Adrenal gland (tissue), 19 donors: ENCODE measurements at regions of chr17 and their contacts with region 1.

Region 1: GRCh38 chr17:8253800-8254199 is 4.7 kb downstream of the PFAS start:
- DNase-seq: peak in 2 of 7 donors; percentile 28 to 34
- H3K4me3 ChIP-seq: no peak overlapping the region
- H3K27ac ChIP-seq: no peak overlapping the region
- H3K4me1 ChIP-seq: peaks cover 0 to 8% of the 10 kb centered on the region in 2 donors
- H3K27me3 ChIP-seq: no peaks in the 10 kb centered on the region
- CTCF ChIP-seq: peak in 2 of 6 experiments; percentile 18 to 28
- POLR2A ChIP-seq: no peak

Region 2: GRCh38 chr17:7687908-7688807 is 565.6 kb before region 1 on chr17 and contains the start of gene WRAP53:
- intact Hi-C with region 1: no loop called
- DNase-seq: peak; percentile 97 to 100 (median 99)
- H3K4me3 ChIP-seq: peak within 1 kb of the TSS; percentile 6 to 99 (median 88)
- H3K27ac ChIP-seq: peak within 1 kb of the TSS; percentile 86 to 98 (median 97)
- H3K4me1 ChIP-seq: peaks cover 5 to 26% of the 10 kb centered on the region in 2 donors
- H3K27me3 ChIP-seq: no peaks in the 10 kb centered on the region
- CTCF ChIP-seq: peak; percentile 98 to 100 (median 99)
- POLR2A ChIP-seq: peak in 1 of 2 donors; percentile 58
- total RNA-seq, gene WRAP53: 3.4 to 15.3 (median 6.7) TPM

Region 3: GRCh38 chr17:8288336-8289102 is 34.7 kb after region 1 on chr17 and contains the start of gene RANGRF:
- intact Hi-C with region 1: loop called (anchors 5 kb)
- DNase-seq: peak; percentile 89 to 95 (median 92)
- H3K4me3 ChIP-seq: peak within 1 kb of the TSS; percentile 59 to 88 (median 70)
- H3K27ac ChIP-seq: peak within 1 kb of the TSS; percentile 75 to 98 (median 94)
- H3K4me1 ChIP-seq: peaks cover 9 to 11% of the 10 kb centered on the region in 2 donors
- H3K27me3 ChIP-seq: no peaks in the 10 kb centered on the region
- CTCF ChIP-seq: peak in 1 of 6 experiments; percentile 8
- POLR2A ChIP-seq: peak; percentile 54
- total RNA-seq, gene RANGRF: 18.8 to 30.2 (median 25.1) TPM

Region 4: DNA sequence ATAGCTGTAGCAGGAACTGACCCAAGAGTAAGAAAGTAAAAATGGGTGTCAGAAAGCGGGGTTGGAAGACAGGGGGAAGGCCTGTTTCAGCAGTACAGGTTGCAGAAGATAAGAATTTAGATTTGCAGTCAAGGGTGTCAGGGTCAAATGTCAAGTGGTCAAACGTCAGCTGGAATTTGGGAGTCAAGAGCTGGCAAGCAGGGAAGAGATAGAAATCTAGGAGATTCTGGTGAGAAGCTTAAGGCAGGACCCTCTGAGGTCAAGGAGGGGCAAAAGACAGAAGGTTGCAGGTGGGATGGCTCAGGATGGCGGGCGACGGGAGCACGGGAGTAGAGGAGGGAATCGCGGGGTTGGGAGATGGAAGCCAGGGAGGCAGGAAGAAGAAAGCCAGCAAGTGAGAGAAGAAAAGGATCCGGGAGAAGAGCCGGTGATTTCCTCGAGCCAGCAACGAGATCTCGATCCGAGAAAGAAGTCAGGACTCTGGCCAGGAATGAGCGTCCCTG is 41.1 kb after region 1 on chr17:
- intact Hi-C with region 1: loop called in 1 of 2 experiments (anchors 5 kb)
- DNase-seq: no peak
- H3K4me3 ChIP-seq: peak overlapping the region in 2 of 4 donors; percentile 41 to 69
- H3K27ac ChIP-seq: peak overlapping the region; percentile 74 to 95 (median 92)
- H3K4me1 ChIP-seq: peaks cover 5 to 10% of the 10 kb centered on the region in 2 donors
- H3K27me3 ChIP-seq: no peaks in the 10 kb centered on the region
- CTCF ChIP-seq: no peak
- POLR2A ChIP-seq: no peak